ENCODE measurements at regions of chr12 and their contacts with region 1.

Region 1: GRCh38 chr12:121189619-121190155 is 20.2 kb upstream of the P2RX4 start:
- DNase-seq: no peak
- ATAC-seq: no peak
- H3K4me3 ChIP-seq: no peak overlapping the region
- H3K27ac ChIP-seq: no peak overlapping the region
- H3K4me1 ChIP-seq: no peaks in the 10 kb centered on the region
- H3K27me3 ChIP-seq: no peaks in the 10 kb centered on the region
- CTCF ChIP-seq: no peak

Region 2: GRCh38 chr12:120750806-120751205 is 438.9 kb before region 1 on chr12:
- CTCF ChIA-PET with region 1: no interaction called
- POLR2A ChIA-PET with region 1: interaction called, 10 read pairs
- in situ Hi-C with region 1: no loop called
- intact Hi-C with region 1: no loop called
- DNase-seq: no peak
- ATAC-seq: 0 out of 2 replicates have a peak, but pooled peaks have one; percentile 21
- H3K4me3 ChIP-seq: no peak overlapping the region
- H3K27ac ChIP-seq: no peak overlapping the region
- H3K4me1 ChIP-seq: no peaks in the 10 kb centered on the region
- H3K27me3 ChIP-seq: no peaks in the 10 kb centered on the region
- CTCF ChIP-seq: no peak; the same call in 1 of the 2 replicates

Region 3: GRCh38 chr12:121033625-121034349 is 155.9 kb before region 1 on chr12:
- CTCF ChIA-PET with region 1: interaction called, 16 read pairs
- POLR2A ChIA-PET with region 1: no interaction called
- in situ Hi-C with region 1: no loop called
- intact Hi-C with region 1: no loop called
- DNase-seq: no peak
- ATAC-seq: peak; percentile 52; the same call in 1 of the 2 replicates
- H3K4me3 ChIP-seq: no peak overlapping the region
- H3K27ac ChIP-seq: no peak overlapping the region
- H3K4me1 ChIP-seq: no peaks in the 10 kb centered on the region
- H3K27me3 ChIP-seq: no peaks in the 10 kb centered on the region
- CTCF ChIP-seq: no peak

Region 4: GRCh38 chr12:121214855-121215745 is 25.4 kb after region 1 on chr12:
- CTCF ChIA-PET with region 1: no interaction called
- POLR2A ChIA-PET with region 1: interaction called, 10 read pairs
- in situ Hi-C with region 1: no loop called
- intact Hi-C with region 1: no loop called
- DNase-seq: peak; percentile 64
- ATAC-seq: peak; percentile 57; the same call in 1 of the 2 replicates
- H3K4me3 ChIP-seq: no peak overlapping the region
- H3K27ac ChIP-seq: no peak overlapping the region
- H3K4me1 ChIP-seq: 0 out of 2 replicates have a peak, but pooled peaks cover 3% of the 10 kb centered on the region
- H3K27me3 ChIP-seq: no peaks in the 10 kb centered on the region
- CTCF ChIP-seq: no peak

Measured in Panc1 (cell line).